ENCODE measurements at regions of chr2 and their contacts with region 1.

Region 1: GRCh38 chr2:171416009-171416926 is 17.5 kb downstream of the METTL8 start:
- DNase-seq: peak; percentile 88

Region 2: GRCh38 chr2:170928824-170929685 is 487.2 kb before region 1 on chr2 and contains the start of gene GORASP2:
- intact Hi-C with region 1: loop called (anchors 5 kb)
- DNase-seq: peak; percentile 99
- total RNA-seq, gene GORASP2: 67.1 TPM

Region 3: DNA sequence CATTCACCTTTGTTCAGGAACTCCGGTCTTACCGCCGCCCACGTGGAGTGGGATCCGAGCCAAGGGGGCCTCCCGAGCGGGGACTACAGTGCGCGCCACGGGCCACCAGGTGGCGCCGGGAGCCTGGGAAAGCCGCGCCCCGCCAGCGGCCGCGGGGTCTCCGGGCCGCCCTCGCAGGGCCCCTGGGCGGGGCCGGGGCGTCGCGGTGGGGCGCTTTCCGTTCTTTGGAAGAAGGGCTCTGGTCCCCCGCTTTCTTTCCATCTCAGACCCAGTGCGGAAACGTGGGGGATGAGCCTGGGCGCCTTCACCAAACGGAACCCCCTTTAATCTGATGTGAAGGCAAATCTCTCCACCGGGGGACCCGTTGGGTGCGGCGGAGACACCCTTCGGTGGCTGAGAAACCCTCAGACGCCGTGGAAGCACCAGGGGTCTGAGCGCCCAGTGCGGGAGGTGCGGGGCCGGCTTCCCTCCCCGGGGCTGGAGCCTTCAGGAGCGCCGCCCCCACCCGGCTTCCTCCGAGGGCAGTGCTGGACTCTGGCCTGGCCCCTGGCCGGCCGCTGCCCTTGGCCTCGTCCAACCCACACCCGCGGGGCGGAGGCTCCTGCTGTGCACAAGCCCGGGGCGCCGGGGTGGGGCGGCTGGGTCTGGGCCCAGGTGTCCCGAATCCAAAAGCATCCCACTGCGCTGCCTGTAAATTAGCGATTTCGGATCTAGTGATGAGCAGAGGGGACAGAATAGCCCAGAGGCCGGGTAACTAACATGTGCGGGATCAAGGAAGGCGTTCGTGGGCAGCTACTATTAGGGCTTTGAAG is 442.6 kb before region 1 on chr2:
- intact Hi-C with region 1: loop called (anchors 1 kb)
- DNase-seq: peak; percentile 92

Region 4: DNA sequence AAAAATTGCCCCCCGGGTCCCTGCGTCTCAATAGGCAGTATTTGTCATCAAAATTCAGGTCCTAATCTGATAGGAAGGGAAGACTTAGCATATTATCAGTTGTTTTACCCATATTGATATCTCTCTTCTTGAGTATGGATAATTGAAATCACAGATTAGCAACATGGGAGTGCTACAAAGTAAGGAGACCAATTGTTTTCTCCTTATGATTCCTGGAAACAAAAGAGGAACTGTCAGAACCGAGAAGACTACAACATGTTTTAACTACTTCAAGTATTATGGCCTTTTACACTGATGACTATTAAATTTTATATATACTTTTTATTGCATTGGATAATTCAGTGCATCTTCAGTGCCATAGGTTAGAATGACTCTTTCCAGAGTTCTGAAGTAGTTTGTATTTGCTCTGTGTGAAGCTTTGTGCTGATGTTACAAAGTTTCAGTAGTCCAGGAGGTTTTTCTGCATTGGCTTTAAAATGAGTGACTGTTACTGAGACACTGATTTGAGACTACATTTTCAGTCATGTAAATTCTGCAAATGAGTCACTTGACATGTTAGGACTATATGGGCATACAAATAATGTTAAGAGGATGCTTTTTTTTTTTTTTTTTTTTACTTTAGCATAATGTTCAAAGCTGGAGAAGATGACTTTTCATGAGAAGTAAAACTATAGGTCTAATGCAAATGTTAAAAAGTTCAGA is 235.9 kb before region 1 on chr2:
- intact Hi-C with region 1: no loop called
- DNase-seq: no peak

Region 5: DNA sequence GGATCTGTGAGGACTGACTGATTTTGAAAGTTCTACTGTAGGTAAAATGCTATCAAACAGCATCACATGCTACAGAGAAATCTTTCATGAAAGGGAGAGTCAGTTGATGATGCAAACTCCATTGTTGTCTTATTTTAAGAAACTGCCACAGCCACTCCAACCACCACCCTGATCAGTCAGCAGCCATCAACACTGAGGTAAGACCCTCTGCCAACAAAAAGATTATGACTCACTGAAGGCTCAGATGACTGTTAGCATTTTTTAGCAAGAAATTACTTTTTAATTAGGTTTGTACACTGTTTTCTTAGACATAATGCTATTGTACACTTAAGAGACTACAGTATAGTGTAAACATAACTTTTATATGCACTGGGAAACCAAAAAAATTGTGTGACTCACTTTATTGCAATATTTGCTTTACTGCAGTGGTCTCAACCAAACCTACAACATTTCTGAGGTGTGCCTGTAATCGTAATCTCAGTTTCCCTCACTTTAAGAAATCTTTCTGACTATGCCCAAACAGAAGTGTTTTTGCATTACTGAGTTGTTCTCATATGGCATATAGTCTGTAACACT is 25.2 kb before region 1 on chr2:
- intact Hi-C with region 1: no loop called
- DNase-seq: no peak

Measured in cardiac septum (tissue), 1 donor.